ENCODE measurements at regions of chr16 and their contacts with region 1.

Region 1: DNA sequence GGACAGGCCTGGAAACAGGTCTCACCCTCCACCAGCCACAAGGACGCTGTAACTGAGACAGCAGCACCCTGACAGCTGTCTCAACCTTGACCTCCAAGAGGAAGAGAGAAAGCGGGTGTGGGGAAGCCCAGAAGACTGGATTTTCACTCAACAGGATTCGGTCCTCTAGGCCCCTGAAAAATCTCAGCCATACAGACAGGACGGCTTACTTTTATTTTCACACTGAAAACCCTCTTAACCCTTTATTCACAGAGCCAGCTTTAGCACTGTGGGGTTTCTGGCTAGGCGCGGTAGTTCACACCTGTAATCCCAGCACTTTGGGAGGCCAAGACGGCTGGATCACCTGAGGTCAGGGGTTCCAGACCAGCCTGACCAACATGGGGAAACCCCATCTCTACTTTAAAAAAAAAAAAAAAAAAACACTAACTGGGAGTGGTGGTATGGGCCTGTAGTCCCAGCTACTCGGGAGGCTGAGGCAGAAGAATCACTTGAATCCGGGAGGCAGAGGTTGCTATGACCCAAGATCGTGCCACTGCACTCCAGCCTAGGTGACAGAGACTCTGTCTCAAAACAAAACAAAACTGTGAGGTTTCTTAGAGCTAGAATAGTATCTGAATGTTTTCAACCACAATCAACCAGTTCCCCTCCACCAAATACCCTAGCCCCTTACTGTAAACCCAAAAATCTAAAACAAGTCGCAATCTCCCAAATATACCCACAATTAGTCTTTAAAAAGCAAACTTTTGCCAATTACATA is 5.3 kb downstream of the ANKRD11 start:
- DNase-seq: no peak
- H3K4me3 Mint-ChIP-seq: peak overlapping the region; percentile 74
- H3K27ac Mint-ChIP-seq: peak overlapping the region; percentile 90
- H3K4me1 Mint-ChIP-seq: peaks cover 75% of the 10 kb centered on the region
- H3K27me3 Mint-ChIP-seq: no peaks in the 10 kb centered on the region

Region 2: GRCh38 chr16:89319883-89320781 is 165.0 kb before region 1 on chr16:
- intact Hi-C with region 1: loop called (anchors 2 kb)
- DNase-seq: no peak
- H3K4me3 Mint-ChIP-seq: no peak overlapping the region
- H3K27ac Mint-ChIP-seq: peak overlapping the region; percentile 48
- H3K4me1 Mint-ChIP-seq: peaks cover 79% of the 10 kb centered on the region
- H3K27me3 Mint-ChIP-seq: no peaks in the 10 kb centered on the region

Region 3: DNA sequence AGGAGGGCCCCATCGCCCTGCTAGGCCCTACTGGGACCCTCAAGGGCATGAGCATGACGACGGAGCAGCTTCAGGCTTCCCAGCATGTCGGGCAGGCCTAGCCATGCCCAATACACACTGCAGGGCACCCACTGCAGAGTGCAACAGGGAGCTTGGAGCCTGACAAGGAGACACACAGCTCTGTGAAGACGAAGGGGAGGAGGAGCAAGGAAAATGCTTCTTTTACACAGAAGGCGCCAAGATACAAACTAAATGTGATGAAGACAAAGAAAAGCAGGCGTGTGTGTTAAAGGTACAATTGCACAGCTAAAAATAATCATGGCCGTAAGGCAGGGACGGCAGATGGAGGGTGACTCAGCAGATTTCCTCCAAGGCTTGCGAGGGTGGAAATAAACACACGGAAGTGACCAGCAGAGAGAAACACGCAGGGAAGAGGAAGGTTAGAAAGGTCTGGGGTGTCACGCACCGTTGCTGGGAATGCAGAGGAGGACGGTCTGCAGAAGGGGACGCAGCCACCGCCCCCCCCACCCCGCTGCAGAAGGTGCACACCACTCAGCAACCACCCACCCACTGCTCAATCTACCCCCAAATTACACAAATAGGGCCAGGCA is 159.1 kb before region 1 on chr16:
- intact Hi-C with region 1: loop called (anchors 2 kb)
- DNase-seq: no peak
- H3K4me3 Mint-ChIP-seq: peak overlapping the region; percentile 13
- H3K27ac Mint-ChIP-seq: peak overlapping the region; percentile 67
- H3K4me1 Mint-ChIP-seq: peaks cover 73% of the 10 kb centered on the region
- H3K27me3 Mint-ChIP-seq: no peaks in the 10 kb centered on the region

Region 4: DNA sequence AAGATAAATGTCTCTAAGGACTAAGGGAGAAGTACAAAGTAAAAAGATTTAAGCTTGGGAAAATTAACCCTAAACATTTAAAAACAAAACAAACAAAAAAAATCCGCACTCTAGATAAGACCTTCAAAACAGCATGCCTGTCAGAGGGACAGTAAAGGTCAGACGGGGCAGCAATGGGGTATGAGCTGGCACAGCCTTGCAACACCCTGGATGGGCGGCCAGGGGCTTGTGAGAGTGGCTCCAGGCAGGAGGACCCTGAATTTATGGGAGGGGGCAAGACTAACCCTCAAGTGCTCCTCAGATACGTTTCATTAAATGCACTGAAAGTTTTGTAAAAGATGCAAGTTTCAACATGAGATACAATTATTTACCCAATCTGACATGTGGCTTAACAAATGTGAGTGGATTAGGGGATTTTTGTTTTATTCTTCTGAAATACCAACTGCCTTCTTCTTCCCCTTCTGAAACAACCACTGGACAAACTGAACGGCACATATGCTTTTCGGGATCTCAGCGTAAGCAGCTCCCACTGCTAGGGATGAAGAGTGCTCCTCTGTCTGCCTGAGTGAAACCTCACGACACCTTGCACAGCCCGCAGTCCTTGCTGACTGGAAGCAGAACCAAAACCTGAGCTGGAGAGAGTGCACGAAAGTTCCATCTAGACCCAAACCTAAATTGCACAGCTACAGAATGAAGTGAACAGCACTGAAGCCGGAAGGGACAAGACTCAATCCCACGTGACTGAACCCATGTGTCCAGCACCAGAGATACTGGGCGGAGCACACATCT is 123.2 kb before region 1 on chr16:
- intact Hi-C with region 1: loop called (anchors 2 kb)
- DNase-seq: no peak
- H3K4me3 Mint-ChIP-seq: peak overlapping the region; percentile 62
- H3K27ac Mint-ChIP-seq: peak overlapping the region; percentile 86
- H3K4me1 Mint-ChIP-seq: peaks cover 88% of the 10 kb centered on the region
- H3K27me3 Mint-ChIP-seq: no peaks in the 10 kb centered on the region

Region 5: DNA sequence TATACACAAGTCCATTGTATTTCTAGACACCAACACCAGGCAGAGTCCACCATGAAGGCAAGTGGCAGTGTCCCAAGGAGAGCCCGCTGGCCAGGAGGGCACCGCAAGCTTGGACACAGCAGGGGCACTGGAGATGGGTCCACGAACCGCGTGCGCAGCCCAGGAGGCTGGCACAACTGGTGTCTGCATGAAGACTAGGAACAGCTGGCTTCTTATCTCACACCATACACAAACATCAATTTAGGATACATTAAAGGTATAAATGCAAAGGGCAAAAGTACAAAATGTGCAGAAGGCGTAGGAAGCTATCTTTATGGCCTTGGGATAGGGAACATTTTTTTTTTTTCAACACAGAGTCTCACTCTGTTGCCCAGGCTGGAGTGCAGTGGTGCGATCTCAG is 47.1 kb before region 1 on chr16:
- intact Hi-C with region 1: loop called (anchors 2 kb)
- DNase-seq: no peak
- H3K4me3 Mint-ChIP-seq: no peak overlapping the region
- H3K27ac Mint-ChIP-seq: no peak overlapping the region
- H3K4me1 Mint-ChIP-seq: peaks cover 80% of the 10 kb centered on the region
- H3K27me3 Mint-ChIP-seq: no peaks in the 10 kb centered on the region

Region 6: DNA sequence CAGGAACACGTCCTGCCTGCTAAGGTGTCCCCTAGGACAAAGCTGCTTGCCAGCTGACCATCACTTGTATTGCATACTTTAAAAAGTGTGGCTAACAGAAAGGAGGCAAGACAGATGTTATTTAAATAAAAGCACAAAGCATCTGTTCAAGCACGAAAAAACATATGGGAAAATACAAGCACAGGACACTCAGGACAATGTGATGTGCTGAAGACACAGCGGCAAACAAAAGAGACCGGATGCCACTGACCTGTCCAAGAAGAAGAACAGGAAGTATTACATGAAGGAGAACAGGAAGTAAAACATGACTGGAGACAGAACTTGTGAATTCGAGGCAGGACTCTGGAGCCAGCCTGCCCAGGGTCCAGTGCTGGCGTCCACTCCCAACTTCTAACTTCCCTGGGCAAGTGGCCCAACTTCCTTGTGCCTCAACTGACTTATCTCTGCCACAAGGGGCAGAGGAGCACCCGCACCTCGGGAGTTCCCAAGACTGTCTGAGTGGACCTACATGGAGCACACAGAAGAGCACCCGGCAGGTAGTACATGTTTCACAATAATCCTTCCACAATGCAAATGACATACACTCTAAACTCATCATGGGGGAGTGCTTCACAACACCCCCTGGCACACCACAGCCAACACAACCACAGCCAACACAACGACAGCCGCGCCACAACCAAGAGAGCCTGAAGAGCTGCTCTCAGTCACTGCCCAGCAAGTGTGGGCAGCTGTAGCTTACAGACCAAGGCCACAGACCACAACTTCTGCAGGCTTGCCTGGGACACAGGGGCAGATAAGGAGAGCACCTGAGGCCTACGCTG is 31.4 kb before region 1 on chr16:
- intact Hi-C with region 1: loop called (anchors 2 kb)
- DNase-seq: no peak
- H3K4me3 Mint-ChIP-seq: no peak overlapping the region
- H3K27ac Mint-ChIP-seq: peak overlapping the region; percentile 6
- H3K4me1 Mint-ChIP-seq: peaks cover 53% of the 10 kb centered on the region
- H3K27me3 Mint-ChIP-seq: no peaks in the 10 kb centered on the region

Region 7: DNA sequence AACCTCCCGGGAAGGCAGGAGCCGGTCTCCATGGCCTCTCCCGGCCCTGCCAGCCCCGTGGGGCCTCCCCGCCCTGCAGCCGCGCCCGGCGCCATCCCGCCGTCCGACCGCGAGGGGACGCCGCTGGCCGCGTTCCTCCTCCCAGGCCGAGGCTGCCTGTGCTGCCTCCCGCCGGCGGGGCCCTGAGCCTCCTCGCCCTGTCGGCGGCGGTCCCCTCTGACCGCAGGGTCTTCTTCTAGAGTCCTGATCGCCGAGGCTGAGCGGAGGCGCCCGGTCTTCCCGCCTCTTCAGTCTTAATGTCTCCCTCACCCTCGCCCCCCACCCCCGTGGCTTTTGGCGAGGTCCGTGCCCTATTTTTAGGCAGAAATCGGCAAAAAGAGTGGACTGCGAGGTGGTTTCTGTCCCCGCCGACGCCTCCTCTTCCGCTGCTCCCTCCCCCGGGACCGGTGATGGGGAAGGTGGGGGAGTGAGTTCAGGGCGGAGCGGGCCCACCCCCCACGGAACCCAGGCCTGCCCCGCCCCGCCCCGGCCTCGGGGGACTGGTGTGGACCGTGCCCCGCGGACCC is 89.7 kb after region 1 on chr16:
- intact Hi-C with region 1: no loop called
- DNase-seq: peak; percentile 46
- H3K4me3 Mint-ChIP-seq: peak overlapping the region; percentile 49
- H3K27ac Mint-ChIP-seq: no peak overlapping the region
- H3K4me1 Mint-ChIP-seq: peaks cover 2% of the 10 kb centered on the region
- H3K27me3 Mint-ChIP-seq: peaks cover 15% of the 10 kb centered on the region